ENCODE measurements at regions of chr22 and their contacts with region 1.

Region 1: DNA sequence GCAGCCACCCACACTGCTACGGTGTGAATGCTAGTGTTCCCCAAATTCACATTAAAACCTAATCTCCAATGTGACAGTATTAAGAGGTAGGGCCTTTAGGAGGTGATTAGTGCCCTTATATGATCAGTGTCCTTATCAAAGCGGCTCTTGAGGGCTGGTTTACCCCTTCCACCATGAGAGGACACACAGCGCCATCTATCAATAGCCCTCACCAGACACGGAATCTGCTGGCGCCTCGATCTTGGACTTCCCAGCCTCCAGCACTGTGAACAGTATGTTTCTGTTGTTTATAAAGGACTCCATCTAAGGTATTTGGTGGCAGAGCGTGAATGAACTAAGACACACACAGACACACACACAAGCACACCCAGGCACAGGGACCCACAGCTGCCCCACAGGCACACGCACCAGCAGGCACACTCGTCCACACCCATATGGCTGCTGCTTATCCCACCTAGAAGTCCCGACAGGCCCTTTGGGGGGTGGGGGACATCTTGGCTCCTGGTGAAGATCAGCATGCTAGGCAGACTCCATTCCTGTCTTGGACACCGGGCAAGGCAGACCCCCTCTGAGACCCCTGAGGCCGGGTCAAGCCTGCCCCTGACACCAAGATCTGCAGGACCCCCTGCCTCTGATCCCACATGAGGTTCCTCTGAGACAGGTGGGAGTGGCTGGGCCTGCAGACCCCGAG is 15.9 kb downstream of the ARVCF start:
- DNase-seq: peak in 1 of 2 donors; percentile 8
- ATAC-seq: peak in 7 of 8 donors; percentile 15 to 57 (median 34)
- H3K4me3 ChIP-seq: no peak overlapping the region
- H3K27ac ChIP-seq: peak overlapping the region in 7 of 10 donors; percentile 35 to 73 (median 56)
- H3K4me1 ChIP-seq: peaks cover 10 to 50% (median 34%) of the 10 kb centered on the region in 9 donors
- H3K27me3 ChIP-seq: no peaks in the 10 kb centered on the region
- CTCF ChIP-seq: peak in 1 of 9 donors; percentile 27

Region 2: GRCh38 chr22:19986410-19987341 is 14.1 kb before region 1 on chr22:
- intact Hi-C with region 1: loop called in 2 of 10 experiments (anchors 1 to 2 kb)
- DNase-seq: peak; percentile 77 to 87
- ATAC-seq: peak; percentile 61 to 87 (median 79)
- H3K4me3 ChIP-seq: peak overlapping the region; percentile 50 to 93 (median 82)
- H3K27ac ChIP-seq: peak overlapping the region; percentile 6 to 95 (median 88)
- H3K4me1 ChIP-seq: peaks cover 38 to 80% (median 54%) of the 10 kb centered on the region in 9 donors
- H3K27me3 ChIP-seq: no peaks in the 10 kb centered on the region
- CTCF ChIP-seq: no peak

Measured in heart right ventricle (tissue), 16 donors.